ENCODE measurements at regions of chr1 and their contacts with region 1.

Region 1: GRCh38 chr1:155208541-155209311 is at the start of gene MTX1:
- H3K4me3 Mint-ChIP-seq: peak within 1 kb of the TSS; percentile 94
- H3K27ac Mint-ChIP-seq: peak within 1 kb of the TSS; percentile 97
- H3K4me1 Mint-ChIP-seq: peaks cover 51% of the 10 kb centered on the region
- H3K27me3 Mint-ChIP-seq: no peaks in the 10 kb centered on the region

Region 2: DNA sequence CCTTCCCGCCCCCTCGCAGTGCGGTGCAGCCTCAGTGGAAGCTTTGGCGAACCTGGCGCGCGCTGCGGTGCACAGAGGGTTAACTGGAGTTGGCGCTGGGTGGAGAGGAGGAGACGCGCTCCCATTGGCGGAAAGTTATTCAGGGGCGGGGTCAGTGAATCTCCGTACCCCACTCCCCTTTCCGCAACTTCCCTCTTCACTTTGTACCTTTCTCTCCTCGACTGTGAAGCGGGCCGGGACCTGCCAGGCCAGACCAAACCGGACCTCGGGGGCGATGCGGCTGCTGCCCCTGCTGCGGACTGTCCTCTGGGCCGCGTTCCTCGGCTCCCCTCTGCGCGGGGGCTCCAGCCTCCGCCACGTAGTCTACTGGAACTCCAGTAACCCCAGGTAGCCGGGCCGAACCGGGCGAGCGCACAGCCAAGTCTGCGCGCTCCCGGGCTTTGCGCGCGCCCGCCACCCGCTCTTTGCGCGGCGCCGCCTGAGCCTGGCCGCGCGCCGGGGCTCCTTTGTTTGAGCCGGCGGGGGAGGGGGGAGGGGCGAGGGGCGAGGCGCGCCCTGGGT is 145.1 kb before region 1 on chr1 and contains the start of gene EFNA4:
- intact Hi-C with region 1: no loop called
- H3K4me3 Mint-ChIP-seq: peak within 1 kb of the TSS; percentile 84
- H3K27ac Mint-ChIP-seq: peak within 1 kb of the TSS; percentile 68
- H3K4me1 Mint-ChIP-seq: peaks cover 72% of the 10 kb centered on the region
- H3K27me3 Mint-ChIP-seq: peaks cover 15% of the 10 kb centered on the region

Region 3: DNA sequence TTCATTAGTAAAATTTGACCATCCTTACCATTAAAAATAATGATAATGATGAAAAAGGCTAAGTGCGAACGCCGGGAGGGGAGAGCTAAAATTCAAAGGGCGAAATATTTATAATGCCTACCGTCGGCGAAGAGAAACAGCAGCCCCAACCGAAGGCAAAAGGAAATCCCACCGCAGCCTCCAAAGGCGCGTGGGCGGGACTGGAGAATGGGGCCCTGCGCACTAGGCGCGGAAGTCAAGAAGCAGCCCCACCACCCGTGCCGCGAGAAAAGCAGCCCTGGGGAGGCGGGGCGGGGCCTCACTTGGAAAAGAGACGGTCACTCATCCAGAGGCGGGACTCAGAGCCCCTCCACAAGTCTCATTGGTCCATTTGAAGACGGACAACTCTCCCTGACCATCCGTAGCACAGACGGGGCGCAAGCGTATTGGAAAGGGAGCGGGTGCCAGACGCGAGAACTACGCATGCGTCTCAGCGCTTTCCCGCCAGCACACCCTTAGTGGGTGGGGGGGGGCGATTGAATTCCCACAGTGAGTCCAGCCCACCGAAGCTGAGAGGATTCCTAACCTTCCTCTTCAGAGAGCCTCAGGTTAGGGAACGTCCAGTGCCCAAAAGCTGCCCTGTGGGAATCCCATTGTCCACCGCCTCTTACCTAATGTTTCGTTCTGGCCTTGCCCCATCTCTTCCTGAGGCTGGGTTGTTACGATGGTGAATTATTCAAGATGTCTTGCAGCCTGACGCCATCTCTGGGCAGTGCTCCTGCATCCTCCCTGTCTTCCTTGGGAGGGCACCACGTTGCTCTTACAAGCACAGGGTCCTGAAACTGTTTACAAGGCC is 18.8 kb after region 1 on chr1:
- intact Hi-C with region 1: loop called (anchors 2 kb)
- H3K4me3 Mint-ChIP-seq: peak overlapping the region; percentile 77
- H3K27ac Mint-ChIP-seq: peak overlapping the region; percentile 93
- H3K4me1 Mint-ChIP-seq: peaks cover 42% of the 10 kb centered on the region
- H3K27me3 Mint-ChIP-seq: peaks cover 3% of the 10 kb centered on the region

Region 4: GRCh38 chr1:155244368-155245162 is 35.8 kb after region 1 on chr1:
- intact Hi-C with region 1: loop called (anchors 5 kb)
- H3K4me3 Mint-ChIP-seq: peak overlapping the region; percentile 78
- H3K27ac Mint-ChIP-seq: peak overlapping the region; percentile 74
- H3K4me1 Mint-ChIP-seq: peaks cover 53% of the 10 kb centered on the region
- H3K27me3 Mint-ChIP-seq: no peaks in the 10 kb centered on the region

Region 5: GRCh38 chr1:155295183-155295941 is 86.6 kb after region 1 on chr1:
- intact Hi-C with region 1: no loop called
- H3K4me3 Mint-ChIP-seq: no peak overlapping the region
- H3K27ac Mint-ChIP-seq: no peak overlapping the region
- H3K4me1 Mint-ChIP-seq: peaks cover 13% of the 10 kb centered on the region
- H3K27me3 Mint-ChIP-seq: peaks cover 70% of the 10 kb centered on the region

Measured in dendritic cell treated with granulocyte-macrophage colony-stimulating factor and Interleukin-4, amounts not matched to agents 40 ng/mL and 50 ng/mL, for 4 days (primary cell).